Ascending aorta (tissue), 2 donors: ENCODE measurements at regions of chr14 and their contacts with region 1.

Region 1: GRCh38 chr14:78959674-78960264 is 789.6 kb downstream of the NRXN3 start:
- DNase-seq: peak in 1 of 2 donors; percentile 82
- H3K4me3 ChIP-seq: peak overlapping the region; percentile 41 to 48
- H3K27ac ChIP-seq: peak overlapping the region; percentile 23 to 58
- H3K4me1 ChIP-seq: no peaks in the 10 kb centered on the region
- H3K27me3 ChIP-seq: no peaks in the 10 kb centered on the region
- CTCF ChIP-seq: peak; percentile 61 to 85 (median 84)

Region 2: GRCh38 chr14:78974691-78975090 is 14.9 kb after region 1 on chr14:
- intact Hi-C with region 1: no loop called
- DNase-seq: no peak
- H3K4me3 ChIP-seq: no peak overlapping the region
- H3K27ac ChIP-seq: no peak overlapping the region
- H3K4me1 ChIP-seq: peaks cover 0 to 2% of the 10 kb centered on the region in 2 donors
- H3K27me3 ChIP-seq: no peaks in the 10 kb centered on the region
- CTCF ChIP-seq: no peak

Region 3: GRCh38 chr14:79279645-79280597 is 320.2 kb after region 1 on chr14:
- intact Hi-C with region 1: loop called (anchors 10 kb)
- DNase-seq: no peak
- H3K4me3 ChIP-seq: peak overlapping the region; percentile 59 to 73
- H3K27ac ChIP-seq: no peak overlapping the region
- H3K4me1 ChIP-seq: peaks cover 2 to 7% of the 10 kb centered on the region in 2 donors
- H3K27me3 ChIP-seq: no peaks in the 10 kb centered on the region
- CTCF ChIP-seq: no peak